Caco-2 (cell line): ENCODE measurements at regions of chr2 and their contacts with region 1.

Region 1: GRCh38 chr2:150222379-150222778 is 265.1 kb downstream of the RND3 start:
- DNase-seq: no peak
- H3K4me3 ChIP-seq: no peak overlapping the region
- H3K4me3 Mint-ChIP-seq: no peak overlapping the region
- H3K27ac Mint-ChIP-seq: peak overlapping the region; percentile 40
- H3K4me1 ChIP-seq: peaks cover 39% of the 10 kb centered on the region
- H3K4me1 Mint-ChIP-seq: peaks cover 25% of the 10 kb centered on the region
- H3K27me3 ChIP-seq: no peaks in the 10 kb centered on the region
- H3K27me3 Mint-ChIP-seq: no peaks in the 10 kb centered on the region
- CTCF ChIP-seq: no peak

Region 2: DNA sequence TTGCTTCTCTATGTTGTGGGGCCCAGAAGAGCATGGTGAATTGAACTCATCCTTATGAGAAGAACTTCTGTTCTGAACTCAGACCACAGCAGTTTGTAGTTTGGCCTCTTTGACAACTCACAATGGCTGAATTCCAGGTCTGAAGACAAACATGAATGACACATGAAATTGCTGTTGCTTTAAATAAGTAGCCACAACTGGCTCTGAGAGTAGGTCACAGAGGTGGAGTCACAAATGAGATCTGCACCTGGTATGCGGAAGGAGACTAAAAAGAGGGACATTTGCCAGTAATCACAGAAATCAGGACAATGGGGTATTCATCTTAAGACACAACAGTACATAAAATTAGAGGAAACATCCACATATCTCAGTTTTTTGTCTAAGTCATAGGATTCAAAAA is 344.5 kb before region 1 on chr2:
- CTCF ChIA-PET with region 1: no interaction called
- POLR2A ChIA-PET with region 1: no interaction called
- intact Hi-C with region 1: no loop called
- DNase-seq: no peak
- H3K4me3 ChIP-seq: no peak overlapping the region
- H3K4me3 Mint-ChIP-seq: no peak overlapping the region
- H3K27ac Mint-ChIP-seq: no peak overlapping the region
- H3K4me1 ChIP-seq: no peaks in the 10 kb centered on the region
- H3K4me1 Mint-ChIP-seq: no peaks in the 10 kb centered on the region
- H3K27me3 ChIP-seq: no peaks in the 10 kb centered on the region
- H3K27me3 Mint-ChIP-seq: no peaks in the 10 kb centered on the region
- CTCF ChIP-seq: no peak

Region 3: DNA sequence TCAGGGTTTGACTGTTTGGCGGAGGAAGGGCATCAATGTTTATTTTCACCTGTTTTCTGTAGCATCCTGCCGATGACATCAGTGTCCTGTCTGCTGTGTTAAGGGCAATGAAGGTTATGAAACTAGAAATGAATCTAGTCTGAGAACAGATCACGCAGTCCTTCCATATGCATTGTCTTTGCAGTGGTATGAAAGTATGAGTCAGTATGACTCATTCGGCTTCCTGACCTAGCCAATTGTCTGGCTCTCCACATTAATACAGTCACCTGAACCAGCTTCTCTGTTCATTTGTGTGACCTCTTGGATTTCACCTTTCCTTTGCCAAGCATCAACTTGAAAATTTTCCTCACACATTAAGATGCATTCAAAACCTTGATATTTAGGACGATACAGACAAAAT is 88.8 kb before region 1 on chr2:
- CTCF ChIA-PET with region 1: no interaction called
- POLR2A ChIA-PET with region 1: no interaction called
- intact Hi-C with region 1: no loop called
- DNase-seq: peak; percentile 55 to 58
- H3K4me3 ChIP-seq: no peak overlapping the region
- H3K4me3 Mint-ChIP-seq: no peak overlapping the region
- H3K27ac Mint-ChIP-seq: no peak overlapping the region
- H3K4me1 ChIP-seq: peaks cover 43% of the 10 kb centered on the region
- H3K4me1 Mint-ChIP-seq: peaks cover 34% of the 10 kb centered on the region
- H3K27me3 ChIP-seq: no peaks in the 10 kb centered on the region
- H3K27me3 Mint-ChIP-seq: no peaks in the 10 kb centered on the region
- CTCF ChIP-seq: no peak

Region 4: GRCh38 chr2:150174971-150175421 is 47.4 kb before region 1 on chr2:
- CTCF ChIA-PET with region 1: no interaction called
- POLR2A ChIA-PET with region 1: interaction called, 3 read pairs
- intact Hi-C with region 1: loop called (anchors 2 kb)
- DNase-seq: no peak
- H3K4me3 ChIP-seq: no peak overlapping the region
- H3K4me3 Mint-ChIP-seq: no peak overlapping the region
- H3K27ac Mint-ChIP-seq: no peak overlapping the region
- H3K4me1 ChIP-seq: peaks cover 22% of the 10 kb centered on the region
- H3K4me1 Mint-ChIP-seq: peaks cover 26% of the 10 kb centered on the region
- H3K27me3 ChIP-seq: no peaks in the 10 kb centered on the region
- H3K27me3 Mint-ChIP-seq: no peaks in the 10 kb centered on the region
- CTCF ChIP-seq: no peak

Region 5: GRCh38 chr2:150371044-150371812 is 148.8 kb after region 1 on chr2:
- CTCF ChIA-PET with region 1: no interaction called
- POLR2A ChIA-PET with region 1: no interaction called
- intact Hi-C with region 1: loop called (anchors 5 kb)
- DNase-seq: peak; percentile 80 to 90
- H3K4me3 ChIP-seq: no peak overlapping the region
- H3K4me3 Mint-ChIP-seq: peak overlapping the region; percentile 19
- H3K27ac Mint-ChIP-seq: peak overlapping the region; percentile 90
- H3K4me1 ChIP-seq: peaks cover 38% of the 10 kb centered on the region
- H3K4me1 Mint-ChIP-seq: peaks cover 23% of the 10 kb centered on the region
- H3K27me3 ChIP-seq: no peaks in the 10 kb centered on the region
- H3K27me3 Mint-ChIP-seq: no peaks in the 10 kb centered on the region
- CTCF ChIP-seq: no peak

Region 6: DNA sequence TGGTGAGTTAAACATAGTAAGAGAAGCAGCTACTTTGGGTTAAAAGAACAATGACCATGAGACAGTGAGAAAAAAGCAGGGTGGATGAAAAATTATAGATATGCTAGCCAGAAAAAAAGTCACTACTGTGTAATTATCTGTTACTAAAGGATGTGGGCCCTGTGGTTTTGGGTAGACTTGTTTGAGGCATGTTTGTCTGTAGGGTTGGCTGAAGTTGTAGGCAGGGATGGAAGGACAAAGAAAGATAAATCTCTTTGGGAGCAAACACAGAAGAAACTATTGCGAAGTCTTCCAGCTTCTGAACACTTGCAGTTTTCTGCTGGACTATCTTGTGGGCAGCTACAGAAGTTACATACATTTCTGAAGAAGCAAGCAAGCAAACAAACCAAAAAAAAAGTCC is 236.9 kb after region 1 on chr2:
- CTCF ChIA-PET with region 1: no interaction called
- POLR2A ChIA-PET with region 1: no interaction called
- intact Hi-C with region 1: no loop called
- DNase-seq: no peak
- H3K4me3 ChIP-seq: no peak overlapping the region
- H3K4me3 Mint-ChIP-seq: no peak overlapping the region
- H3K27ac Mint-ChIP-seq: no peak overlapping the region
- H3K4me1 ChIP-seq: no peaks in the 10 kb centered on the region; the same call in 1 of the 2 replicates
- H3K4me1 Mint-ChIP-seq: peaks cover under 1% of the 10 kb centered on the region
- H3K27me3 ChIP-seq: no peaks in the 10 kb centered on the region
- H3K27me3 Mint-ChIP-seq: no peaks in the 10 kb centered on the region
- CTCF ChIP-seq: no peak

Region 7: GRCh38 chr2:150513647-150514046 is 291.3 kb after region 1 on chr2:
- CTCF ChIA-PET with region 1: no interaction called
- POLR2A ChIA-PET with region 1: no interaction called
- intact Hi-C with region 1: no loop called
- DNase-seq: no peak
- H3K4me3 ChIP-seq: no peak overlapping the region
- H3K4me3 Mint-ChIP-seq: no peak overlapping the region
- H3K27ac Mint-ChIP-seq: no peak overlapping the region
- H3K4me1 ChIP-seq: peaks cover 2% of the 10 kb centered on the region; the same call in 1 of the 2 replicates
- H3K4me1 Mint-ChIP-seq: no peaks in the 10 kb centered on the region
- H3K27me3 ChIP-seq: no peaks in the 10 kb centered on the region
- H3K27me3 Mint-ChIP-seq: no peaks in the 10 kb centered on the region
- CTCF ChIP-seq: no peak